Mammary epithelial cell (primary cell): ENCODE measurements at regions of chr5 and their contacts with region 1.

Region 1: GRCh38 chr5:86880785-86881492 is 263.2 kb downstream of the COX7C start:
- DNase-seq: peak; percentile 64
- H3K4me3 ChIP-seq: no peak overlapping the region
- H3K27ac ChIP-seq: no peak overlapping the region
- H3K4me1 ChIP-seq: no peaks in the 10 kb centered on the region
- H3K27me3 ChIP-seq: no peaks in the 10 kb centered on the region
- CTCF ChIP-seq: peak; percentile 83 to 88

Region 2: GRCh38 chr5:86864051-86864450 is 16.9 kb before region 1 on chr5:
- CTCF ChIA-PET with region 1: no interaction called
- dilution Hi-C with region 1: no loop called
- in situ Hi-C with region 1: no loop called
- intact Hi-C with region 1: no loop called
- DNase-seq: no peak
- H3K4me3 ChIP-seq: no peak overlapping the region
- H3K27ac ChIP-seq: no peak overlapping the region
- H3K4me1 ChIP-seq: no peaks in the 10 kb centered on the region
- H3K27me3 ChIP-seq: no peaks in the 10 kb centered on the region
- CTCF ChIP-seq: no peak

Region 3: GRCh38 chr5:86968301-86968753 is 87.4 kb after region 1 on chr5:
- CTCF ChIA-PET with region 1: no interaction called
- dilution Hi-C with region 1: no loop called
- in situ Hi-C with region 1: no loop called
- intact Hi-C with region 1: loop called (anchors 1 kb)
- DNase-seq: peak; percentile 21
- H3K4me3 ChIP-seq: no peak overlapping the region
- H3K27ac ChIP-seq: no peak overlapping the region
- H3K4me1 ChIP-seq: no peaks in the 10 kb centered on the region
- H3K27me3 ChIP-seq: no peaks in the 10 kb centered on the region
- CTCF ChIP-seq: peak; percentile 29 to 38

Region 4: DNA sequence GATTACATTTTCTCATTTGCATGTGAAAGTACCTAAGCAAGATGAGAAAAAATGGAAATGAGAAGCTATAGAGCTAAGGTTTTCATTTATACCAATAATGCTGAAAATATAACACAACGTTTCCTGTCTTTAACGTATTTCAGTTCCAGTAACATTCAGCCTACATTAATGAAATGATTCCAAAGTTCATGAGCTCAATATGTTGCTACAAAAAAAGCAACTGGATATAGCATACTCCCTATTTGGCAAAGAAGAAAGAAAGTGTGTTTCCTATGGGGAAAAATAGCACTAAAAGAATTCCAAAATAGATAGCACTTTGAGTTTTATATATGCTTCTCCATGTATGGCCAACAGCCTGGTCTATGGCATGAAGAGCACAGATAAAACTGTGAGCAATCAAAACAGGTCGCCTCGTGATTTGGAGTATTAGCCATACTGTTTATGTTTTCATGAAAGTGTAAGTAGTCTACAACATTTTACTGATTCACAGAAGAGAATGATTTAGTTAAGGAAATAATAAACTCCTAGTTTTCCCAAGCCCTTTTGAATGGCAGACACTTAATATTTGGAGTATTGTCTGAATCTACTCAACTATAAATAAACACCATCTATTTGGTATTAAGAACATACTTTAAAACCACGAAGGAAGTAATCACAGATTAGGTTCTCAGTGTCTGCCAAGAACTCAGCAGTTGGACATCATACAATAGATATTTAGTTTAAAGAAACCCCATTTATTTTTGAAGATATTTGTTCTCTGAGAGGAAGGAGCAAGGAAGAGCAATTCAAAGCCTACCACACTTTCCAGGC is 128.0 kb after region 1 on chr5:
- CTCF ChIA-PET with region 1: no interaction called
- dilution Hi-C with region 1: no loop called
- in situ Hi-C with region 1: no loop called
- intact Hi-C with region 1: loop called (anchors 1 kb)
- DNase-seq: no peak
- H3K4me3 ChIP-seq: no peak overlapping the region
- H3K27ac ChIP-seq: no peak overlapping the region
- H3K4me1 ChIP-seq: no peaks in the 10 kb centered on the region
- H3K27me3 ChIP-seq: no peaks in the 10 kb centered on the region
- CTCF ChIP-seq: no peak

Region 5: GRCh38 chr5:87400305-87400899 is 519.5 kb after region 1 on chr5:
- CTCF ChIA-PET with region 1: no interaction called
- dilution Hi-C with region 1: no loop called
- in situ Hi-C with region 1: no loop called
- intact Hi-C with region 1: loop called (anchors 10 kb)
- DNase-seq: peak; percentile 27
- H3K4me3 ChIP-seq: no peak overlapping the region
- H3K27ac ChIP-seq: no peak overlapping the region
- H3K4me1 ChIP-seq: peaks cover 7% of the 10 kb centered on the region
- H3K27me3 ChIP-seq: no peaks in the 10 kb centered on the region
- CTCF ChIP-seq: peak; percentile 59 to 66